ENCODE measurements at regions of chr3 and their contacts with region 1.

Region 1: GRCh38 chr3:186783073-186783730 is at the start of gene EIF4A2:
- DNase-seq: peak; percentile 90
- H3K4me3 Mint-ChIP-seq: peak within 1 kb of the TSS; percentile 99
- H3K27ac Mint-ChIP-seq: peak within 1 kb of the TSS; percentile 99
- H3K4me1 Mint-ChIP-seq: peaks cover 40% of the 10 kb centered on the region
- H3K27me3 Mint-ChIP-seq: no peaks in the 10 kb centered on the region
- total RNA-seq, gene EIF4A2: 351 to 383 TPM

Region 2: DNA sequence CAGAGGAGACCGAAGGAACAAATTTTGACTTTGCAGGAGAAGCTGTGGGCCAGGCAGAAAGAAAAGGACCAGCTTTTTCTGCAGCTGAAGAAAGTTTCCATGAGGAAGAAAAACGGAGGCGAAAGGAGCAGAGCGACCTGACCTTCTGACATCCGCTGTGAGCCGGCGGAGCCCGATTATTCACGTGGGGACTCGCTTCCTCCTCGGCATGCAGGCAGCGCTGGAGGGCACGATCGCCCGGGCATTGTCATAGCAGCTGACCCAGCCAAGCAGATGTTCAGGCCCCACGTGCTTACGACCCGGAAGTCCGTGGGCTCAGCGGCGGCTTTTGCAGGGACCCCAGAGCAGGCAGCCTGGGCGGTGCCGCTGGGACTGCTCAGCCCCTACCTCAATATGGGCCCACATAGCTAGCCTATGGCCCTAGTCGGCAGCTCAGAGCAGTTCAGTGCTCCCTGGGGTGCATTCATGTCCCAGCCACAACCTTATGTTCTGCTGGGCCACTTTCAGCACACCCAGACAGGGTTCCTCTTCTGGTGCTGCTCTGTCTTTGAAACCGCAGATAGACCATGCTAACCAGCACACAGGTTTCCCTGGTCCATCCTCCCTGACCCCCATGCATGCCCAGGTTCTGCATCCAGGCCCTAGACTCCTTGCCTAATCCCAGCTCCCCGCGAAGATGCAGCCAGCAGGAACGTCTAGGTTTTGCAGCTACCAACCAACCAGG is 10.3 kb before region 1 on chr3:
- CTCF ChIA-PET with region 1: interaction called, 7 read pairs
- POLR2A ChIA-PET with region 1: interaction called, 17 read pairs
- DNase-seq: peak; percentile 67
- H3K4me3 Mint-ChIP-seq: peak overlapping the region; percentile 81
- H3K27ac Mint-ChIP-seq: peak overlapping the region; percentile 95
- H3K4me1 Mint-ChIP-seq: peaks cover 19% of the 10 kb centered on the region
- H3K27me3 Mint-ChIP-seq: peaks cover 2% of the 10 kb centered on the region